K562 (cell line): ENCODE measurements at regions of chr11 and their contacts with region 1.

Region 1: DNA sequence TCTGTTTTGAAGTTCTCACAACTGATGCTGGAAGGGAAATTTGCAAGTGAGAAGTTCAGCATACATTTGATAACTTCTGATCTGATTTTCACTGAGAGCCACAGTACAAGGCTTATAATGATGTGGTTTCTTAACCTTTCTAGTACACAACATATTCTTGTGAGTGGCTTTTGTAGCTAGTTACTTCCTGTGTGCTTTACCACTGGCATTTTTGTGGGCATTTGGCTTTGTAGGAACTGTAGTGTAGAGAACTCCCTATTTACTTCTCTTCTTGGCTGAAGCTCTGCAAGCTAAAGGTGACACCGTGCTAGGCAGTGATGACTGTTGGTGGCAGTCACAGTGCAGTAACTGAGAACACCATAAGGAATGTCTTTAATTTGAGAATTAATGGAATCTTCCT is 14.9 kb downstream of the USP47 start:
- DNase-seq: no peak
- ATAC-seq: no peak
- H3K4me3 ChIP-seq: no peak overlapping the region
- H3K27ac ChIP-seq: no peak overlapping the region
- H3K4me1 ChIP-seq: peaks cover 4 to 9% of the 10 kb centered on the region in 2 experiments; a peak in 2 of 5 replicates
- H3K27me3 ChIP-seq: no peaks in the 10 kb centered on the region
- CTCF ChIP-seq: no peak
- EP300 ChIP-seq: no peak
- POLR2A ChIP-seq: no peak
- RAD21 ChIP-seq: no peak

Region 2: DNA sequence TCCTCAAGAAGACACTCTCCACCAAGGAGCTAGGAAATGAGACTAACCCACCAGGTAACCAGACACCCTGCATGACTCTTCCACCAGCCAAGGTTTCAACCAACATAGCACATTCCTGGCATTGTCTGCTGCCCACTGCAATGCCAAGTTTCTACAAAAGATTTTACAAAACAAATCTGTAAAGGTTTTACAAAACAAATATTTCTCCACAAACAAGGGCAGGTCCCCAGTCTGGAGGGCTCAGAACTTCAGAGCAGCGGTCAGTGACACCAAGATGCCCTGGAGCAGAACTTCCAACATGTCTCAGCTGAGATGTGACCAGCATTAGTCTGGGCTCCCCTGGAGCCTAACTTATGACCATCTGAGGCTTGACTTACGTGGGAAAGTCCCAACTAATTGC is 248.9 kb before region 1 on chr11:
- CTCF ChIA-PET with region 1: no interaction called
- POLR2A ChIA-PET with region 1: no interaction called
- in situ Hi-C with region 1: no loop called
- intact Hi-C with region 1: no loop called
- DNase-seq: no peak
- ATAC-seq: no peak
- H3K4me3 ChIP-seq: no peak overlapping the region
- H3K27ac ChIP-seq: no peak overlapping the region
- H3K4me1 ChIP-seq: no peaks in the 10 kb centered on the region
- H3K27me3 ChIP-seq: peaks cover 3 to 39% of the 10 kb centered on the region in 2 experiments; a peak in 4 of 5 replicates
- CTCF ChIP-seq: no peak
- EP300 ChIP-seq: no peak
- POLR2A ChIP-seq: no peak
- RAD21 ChIP-seq: no peak

Region 3: GRCh38 chr11:11841723-11842420 is 14.8 kb before region 1 on chr11 and contains the start of gene USP47:
- CTCF ChIA-PET with region 1: no interaction called
- POLR2A ChIA-PET with region 1: interaction called, 46 read pairs
- in situ Hi-C with region 1: no loop called
- intact Hi-C with region 1: no loop called
- DNase-seq: peak; percentile 74 to 92 (median 78)
- ATAC-seq: peak; percentile 76
- H3K4me3 ChIP-seq: peak within 1 kb of the TSS; percentile 89
- H3K27ac ChIP-seq: peak within 1 kb of the TSS; percentile 96
- H3K4me1 ChIP-seq: peaks cover 4 to 26% of the 10 kb centered on the region in 2 experiments; a peak in 4 of 5 replicates
- H3K27me3 ChIP-seq: no peaks in the 10 kb centered on the region
- CTCF ChIP-seq: peak; percentile 43 to 60 (median 51); a peak in 4 of 6 replicates
- EP300 ChIP-seq: no peak
- POLR2A ChIP-seq: peak; percentile 94
- RAD21 ChIP-seq: peak in 1 of 2 experiments; percentile 31; a peak in 2 of 4 replicates
- polyA plus RNA-seq, gene USP47: 13.1 to 16.4 TPM

Region 4: GRCh38 chr11:11966826-11967668 is 110.4 kb after region 1 on chr11:
- CTCF ChIA-PET with region 1: no interaction called
- POLR2A ChIA-PET with region 1: no interaction called
- in situ Hi-C with region 1: no loop called
- intact Hi-C with region 1: no loop called
- DNase-seq: peak; percentile 81 to 86 (median 84)
- ATAC-seq: peak; percentile 98
- H3K4me3 ChIP-seq: no peak overlapping the region
- H3K27ac ChIP-seq: no peak overlapping the region
- H3K4me1 ChIP-seq: peaks cover 0 to 12% of the 10 kb centered on the region in 2 experiments; a peak in 2 of 5 replicates
- H3K27me3 ChIP-seq: peaks cover 36 to 74% of the 10 kb centered on the region in 2 experiments
- CTCF ChIP-seq: peak; percentile 80 to 95 (median 83)
- EP300 ChIP-seq: no peak
- POLR2A ChIP-seq: no peak
- RAD21 ChIP-seq: peak; percentile 13 to 67; a peak in 2 of 4 replicates